Tibial artery (tissue), 4 donors: ENCODE measurements at regions of chr17 and their contacts with region 1.

Region 1: DNA sequence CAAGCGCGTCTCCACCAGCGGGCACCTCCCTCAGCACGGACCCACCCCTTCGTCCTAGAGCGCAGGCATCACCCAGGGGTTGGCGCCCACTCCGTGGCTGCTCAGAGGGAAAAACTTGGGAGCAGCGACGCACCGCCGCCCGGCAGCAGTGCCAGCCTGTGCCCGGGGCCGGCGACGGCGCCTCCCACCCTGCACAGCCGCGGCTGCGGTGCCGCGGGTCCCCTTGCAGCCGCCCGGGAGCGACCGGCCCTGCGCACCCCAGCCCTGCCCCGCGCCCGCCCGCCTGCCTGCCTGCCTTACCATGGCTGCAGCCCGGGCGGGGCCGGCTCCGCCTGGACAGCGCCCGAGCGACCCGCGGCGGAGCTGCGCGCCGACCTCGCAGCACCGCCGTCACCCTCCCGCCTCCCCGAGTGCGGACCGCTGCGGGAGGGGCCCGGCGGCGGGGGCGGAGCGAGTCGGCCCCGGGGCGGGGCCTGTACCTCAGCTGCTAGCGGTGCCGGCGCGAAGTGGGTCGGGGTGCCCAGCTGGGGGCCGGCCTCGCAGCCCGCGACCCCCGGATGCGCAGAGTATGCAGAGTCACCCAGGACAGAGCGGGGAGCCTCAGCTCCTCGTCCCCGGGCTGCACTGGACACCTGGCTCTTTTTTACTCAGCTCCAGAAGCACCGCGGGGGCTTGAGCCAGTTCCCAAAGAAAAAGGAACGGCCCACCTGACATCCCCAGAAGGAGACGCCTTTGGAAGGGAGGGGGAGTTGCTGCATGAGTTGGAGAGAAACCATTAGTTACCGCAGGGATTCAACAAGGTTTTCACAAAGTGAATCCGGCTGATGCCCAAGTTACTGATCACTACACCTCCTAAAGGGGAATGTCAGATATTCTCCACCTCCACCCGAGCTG is 17.5 kb upstream of the MTMR4 start:
- DNase-seq: peak; percentile 42 to 80
- H3K4me3 ChIP-seq: peak overlapping the region; percentile 58 to 67
- H3K27ac ChIP-seq: peak overlapping the region; percentile 70 to 75
- H3K4me1 ChIP-seq: peaks cover 0 to 52% (median 44%) of the 10 kb centered on the region in 4 donors
- H3K27me3 ChIP-seq: no peaks in the 10 kb centered on the region
- CTCF ChIP-seq: no peak

Region 2: DNA sequence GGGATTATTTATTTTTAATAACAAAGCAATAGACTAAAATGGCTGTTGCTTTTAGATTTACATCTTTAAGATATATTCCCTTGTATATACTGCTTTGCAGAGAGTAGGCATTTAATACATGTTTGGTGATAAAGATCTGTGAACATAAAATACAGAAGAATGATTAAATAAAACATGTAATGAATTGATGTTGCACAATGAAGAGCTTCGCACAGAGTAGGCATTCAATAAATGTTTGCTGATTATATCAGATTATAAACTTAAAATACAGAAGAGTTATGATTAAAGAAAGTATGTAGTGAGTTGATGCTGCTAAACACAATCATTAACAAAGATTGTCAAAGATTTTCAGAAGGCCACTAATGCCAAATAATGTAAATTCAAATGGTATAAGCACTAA is 68.1 kb before region 1 on chr17:
- intact Hi-C with region 1: no loop called
- DNase-seq: no peak
- H3K4me3 ChIP-seq: no peak overlapping the region
- H3K27ac ChIP-seq: no peak overlapping the region
- H3K4me1 ChIP-seq: no peaks in the 10 kb centered on the region
- H3K27me3 ChIP-seq: no peaks in the 10 kb centered on the region
- CTCF ChIP-seq: no peak

Region 3: DNA sequence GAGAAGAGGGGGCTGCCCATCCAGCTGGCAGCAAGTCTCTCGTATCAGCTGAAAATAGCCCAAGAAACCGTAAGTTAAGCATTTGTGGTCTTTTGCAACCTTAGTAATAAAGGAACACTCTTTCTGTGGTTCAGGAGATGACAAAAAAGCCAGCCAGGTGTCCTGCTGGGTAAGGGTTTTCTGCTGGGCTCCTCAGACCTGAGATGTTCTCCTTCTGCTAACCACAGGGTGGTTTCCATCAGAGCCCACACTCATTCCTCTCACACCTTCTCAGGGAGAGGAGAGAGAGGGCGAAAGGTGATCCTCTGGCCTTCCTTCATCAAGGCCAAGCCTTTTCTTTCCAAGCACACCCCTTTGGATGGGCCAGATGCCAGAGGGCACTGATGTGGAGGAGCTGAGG is 89.3 kb after region 1 on chr17:
- intact Hi-C with region 1: loop called (anchors 10 kb)
- DNase-seq: no peak
- H3K4me3 ChIP-seq: no peak overlapping the region
- H3K27ac ChIP-seq: no peak overlapping the region
- H3K4me1 ChIP-seq: no peaks in the 10 kb centered on the region
- H3K27me3 ChIP-seq: no peaks in the 10 kb centered on the region
- CTCF ChIP-seq: no peak